Spleen (tissue), 13 donors: ENCODE measurements at regions of chr2 and their contacts with region 1.

Region 1: GRCh38 chr2:73284296-73285158 is at the start of gene FBXO41:
- DNase-seq: peak; percentile 93
- H3K4me3 ChIP-seq: peak within 1 kb of the TSS; percentile 60 to 86 (median 70)
- H3K27ac ChIP-seq: peak within 1 kb of the TSS; percentile 29 to 87 (median 79)
- H3K4me1 ChIP-seq: peaks cover 0 to 42% (median 27%) of the 10 kb centered on the region in 6 donors
- H3K27me3 ChIP-seq: peaks cover 0 to 47% (median 9%) of the 10 kb centered on the region in 7 donors
- CTCF ChIP-seq: no peak
- POLR2A ChIP-seq: no peak
- total RNA-seq, gene FBXO41: 10.0 to 15.9 (median 13.3) TPM

Region 2: GRCh38 chr2:73385595-73386341 is 101.2 kb after region 1 on chr2 and contains the start of gene ALMS1:
- intact Hi-C with region 1: loop called (anchors 10 kb)
- DNase-seq: peak; percentile 98
- H3K4me3 ChIP-seq: peak within 1 kb of the TSS; percentile 66 to 90 (median 83)
- H3K27ac ChIP-seq: peak within 1 kb of the TSS; percentile 76 to 97 (median 90)
- H3K4me1 ChIP-seq: peaks cover 0 to 30% (median 17%) of the 10 kb centered on the region in 6 donors
- H3K27me3 ChIP-seq: peaks cover 0 to 4% (median 0%) of the 10 kb centered on the region in 7 donors
- CTCF ChIP-seq: peak in 6 of 11 experiments; percentile 24 to 48 (median 35)
- POLR2A ChIP-seq: no peak
- total RNA-seq, gene ALMS1: 12.8 to 34.2 (median 21.4) TPM